Left cardiac atrium (tissue), 4 donors: ENCODE measurements at regions of chr17 and their contacts with region 1.

Region 1: GRCh38 chr17:42677008-42677857 is 439 bp upstream of the PLEKHH3 start:
- DNase-seq: peak; percentile 100
- ATAC-seq: peak; percentile 68 to 79

Region 2: GRCh38 chr17:42577532-42578281 is 99.5 kb before region 1 on chr17 and contains the start of gene PSMC3IP:
- intact Hi-C with region 1: loop called (anchors 10 kb)
- DNase-seq: peak; percentile 97
- ATAC-seq: peak; percentile 96
- total RNA-seq, gene PSMC3IP: 2.2 to 3.4 TPM

Region 3: DNA sequence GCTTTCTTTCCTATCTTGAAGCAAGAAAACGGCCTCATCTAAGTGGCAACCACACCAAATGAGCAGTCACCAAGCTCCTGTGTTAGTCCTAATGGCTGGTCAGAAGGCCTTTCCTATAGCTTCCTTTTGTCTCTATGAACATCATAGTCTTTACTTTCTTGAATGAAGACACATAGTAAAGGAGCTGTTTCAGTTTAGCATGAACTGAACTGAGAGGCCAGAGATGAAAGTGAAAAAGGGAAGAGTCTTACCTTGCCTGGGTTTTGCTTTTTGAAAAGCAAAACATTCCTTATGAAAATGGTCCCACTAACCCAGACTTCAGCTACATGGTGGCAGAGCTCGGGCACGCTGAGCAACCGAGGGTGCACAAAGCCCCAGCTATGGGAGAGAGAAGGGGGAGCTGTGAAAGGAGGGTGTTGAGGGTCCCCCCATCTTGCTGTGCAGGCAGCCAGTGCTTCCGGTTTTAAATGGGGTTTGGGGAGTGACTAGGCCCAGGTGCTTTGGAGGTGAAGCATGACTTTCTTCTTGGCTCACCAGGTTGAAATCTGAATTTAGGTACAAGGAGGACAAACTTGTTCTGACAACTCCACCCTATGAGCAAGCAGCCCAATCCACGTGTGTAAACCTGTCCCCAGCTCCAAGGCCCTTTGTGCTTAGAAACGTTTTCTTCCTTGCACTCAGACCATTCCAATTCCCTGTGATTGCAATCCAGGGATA is 90.6 kb before region 1 on chr17:
- intact Hi-C with region 1: loop called in 1 of 2 experiments (anchors 10 kb)
- DNase-seq: no peak
- ATAC-seq: no peak

Region 4: GRCh38 chr17:42609182-42609813 is 67.9 kb before region 1 on chr17 and contains the starts of genes RETREG3 and TUBG1:
- intact Hi-C with region 1: loop called in 1 of 2 experiments (anchors 5 kb)
- DNase-seq: peak; percentile 99
- ATAC-seq: peak; percentile 97
- total RNA-seq, gene RETREG3: 26.0 to 26.1 TPM
- total RNA-seq, gene TUBG1: 45.3 to 54.8 TPM